Activated CD4-positive, alpha-beta T cell treated with anti-CD3 and anti-CD28 coated beads for 36 hours (primary cell): ENCODE measurements at regions of chr2 and their contacts with region 1.

Region 1: GRCh38 chr2:174341286-174341994 is 6.7 kb downstream of the SP9 start:
- DNase-seq: peak; percentile 94
- ATAC-seq: peak; percentile 72
- H3K4me3 Mint-ChIP-seq: peak overlapping the region; percentile 52
- H3K27ac Mint-ChIP-seq: peak overlapping the region; percentile 42
- H3K4me1 Mint-ChIP-seq: peaks cover 39% of the 10 kb centered on the region
- H3K27me3 Mint-ChIP-seq: peaks cover 59% of the 10 kb centered on the region

Region 2: DNA sequence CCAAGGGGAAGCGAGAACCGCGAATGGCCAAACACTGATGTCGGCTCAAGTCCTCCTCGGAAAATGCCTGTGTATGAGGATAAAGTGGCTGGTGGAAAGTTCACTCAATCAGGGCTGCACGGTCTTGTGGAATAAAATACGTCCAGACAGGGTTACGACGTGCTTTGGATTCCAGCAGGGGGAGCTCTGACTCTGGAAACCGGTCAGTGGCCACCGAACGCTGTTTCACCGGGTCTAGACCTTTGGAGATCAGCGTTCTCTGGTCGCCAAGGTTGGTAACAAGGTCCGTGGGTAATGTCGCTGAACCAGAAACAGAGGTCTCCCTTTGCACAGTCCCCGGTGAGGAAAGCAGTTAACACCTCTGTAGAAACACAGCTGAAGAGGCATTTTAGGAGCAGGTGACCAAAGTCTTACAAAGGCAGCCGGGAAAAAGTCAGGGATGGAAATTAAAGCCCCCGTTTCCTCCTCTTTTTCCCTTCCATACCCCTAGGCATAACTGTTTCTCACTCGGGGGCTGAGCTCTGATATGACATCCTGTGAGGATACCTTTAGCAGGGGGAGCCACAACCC is 939.0 kb before region 1 on chr2:
- CTCF ChIA-PET with region 1: interaction called, 31 read pairs
- POLR2A ChIA-PET with region 1: no interaction called
- intact Hi-C with region 1: loop called (anchors 1 kb)
- DNase-seq: peak; percentile 85
- ATAC-seq: peak; percentile 96
- H3K4me3 Mint-ChIP-seq: no peak overlapping the region
- H3K27ac Mint-ChIP-seq: no peak overlapping the region
- H3K4me1 Mint-ChIP-seq: peaks cover 5% of the 10 kb centered on the region
- H3K27me3 Mint-ChIP-seq: peaks cover 43% of the 10 kb centered on the region

Region 3: DNA sequence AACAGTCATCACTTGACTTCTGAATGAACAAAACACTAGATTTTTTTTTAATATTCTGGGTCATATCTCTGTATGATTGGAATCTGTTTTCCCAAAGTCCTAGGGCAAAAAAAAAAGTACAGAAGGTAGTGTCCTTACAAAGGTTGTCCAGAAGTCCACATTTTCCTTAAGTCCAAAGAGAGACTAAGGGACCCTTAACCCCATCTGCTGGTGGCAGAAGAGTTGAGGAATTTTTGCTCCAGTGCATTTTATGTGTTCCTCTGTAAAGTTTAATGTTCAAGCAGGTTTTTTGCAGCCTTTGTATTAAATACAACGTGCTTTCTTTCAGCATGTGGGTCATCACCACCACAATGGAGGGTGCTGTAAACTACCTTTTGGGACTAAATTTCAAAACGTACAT is 592.1 kb before region 1 on chr2:
- CTCF ChIA-PET with region 1: no interaction called
- POLR2A ChIA-PET with region 1: no interaction called
- intact Hi-C with region 1: loop called in 1 of 2 experiments (anchors 5 kb)
- DNase-seq: no peak
- ATAC-seq: no peak
- H3K4me3 Mint-ChIP-seq: no peak overlapping the region
- H3K27ac Mint-ChIP-seq: no peak overlapping the region
- H3K4me1 Mint-ChIP-seq: no peaks in the 10 kb centered on the region
- H3K27me3 Mint-ChIP-seq: peaks cover 6% of the 10 kb centered on the region

Region 4: DNA sequence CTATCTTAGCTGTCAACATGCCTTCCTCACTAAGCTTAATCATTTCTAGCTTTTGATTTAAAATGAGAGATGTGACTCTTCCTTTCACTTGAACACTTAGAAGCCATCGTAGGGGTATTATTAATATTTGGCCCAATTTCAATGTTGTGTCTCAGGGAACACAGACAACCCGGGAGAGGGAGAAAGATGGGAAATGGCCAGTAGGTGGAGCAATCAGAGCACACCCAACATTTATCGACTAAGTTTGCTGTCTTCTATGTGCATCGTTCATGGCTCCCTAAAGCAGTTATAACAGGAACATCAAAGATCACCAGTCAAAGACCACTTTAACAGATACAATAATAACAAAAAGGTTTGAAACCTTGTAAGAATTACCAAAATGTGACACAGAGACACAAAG is 203.3 kb before region 1 on chr2:
- CTCF ChIA-PET with region 1: interaction called, 7 read pairs
- POLR2A ChIA-PET with region 1: no interaction called
- intact Hi-C with region 1: loop called in 1 of 2 experiments (anchors 5 kb)
- DNase-seq: no peak
- ATAC-seq: no peak
- H3K4me3 Mint-ChIP-seq: no peak overlapping the region
- H3K27ac Mint-ChIP-seq: peak overlapping the region; percentile 21
- H3K4me1 Mint-ChIP-seq: peaks cover 5% of the 10 kb centered on the region
- H3K27me3 Mint-ChIP-seq: no peaks in the 10 kb centered on the region

Region 5: GRCh38 chr2:174218773-174219172 is 122.7 kb before region 1 on chr2:
- CTCF ChIA-PET with region 1: no interaction called
- POLR2A ChIA-PET with region 1: no interaction called
- intact Hi-C with region 1: no loop called
- DNase-seq: no peak
- ATAC-seq: no peak
- H3K4me3 Mint-ChIP-seq: no peak overlapping the region
- H3K27ac Mint-ChIP-seq: no peak overlapping the region
- H3K4me1 Mint-ChIP-seq: no peaks in the 10 kb centered on the region
- H3K27me3 Mint-ChIP-seq: no peaks in the 10 kb centered on the region

Region 6: GRCh38 chr2:174326161-174327020 is 15.0 kb before region 1 on chr2:
- CTCF ChIA-PET with region 1: interaction called, 29 read pairs
- POLR2A ChIA-PET with region 1: no interaction called
- intact Hi-C with region 1: no loop called
- DNase-seq: peak; percentile 46
- ATAC-seq: peak; percentile 49
- H3K4me3 Mint-ChIP-seq: peak overlapping the region; percentile 65
- H3K27ac Mint-ChIP-seq: no peak overlapping the region
- H3K4me1 Mint-ChIP-seq: peaks cover 27% of the 10 kb centered on the region
- H3K27me3 Mint-ChIP-seq: peaks cover 74% of the 10 kb centered on the region